ENCODE measurements at regions of chr17 and their contacts with region 1.

Region 1: DNA sequence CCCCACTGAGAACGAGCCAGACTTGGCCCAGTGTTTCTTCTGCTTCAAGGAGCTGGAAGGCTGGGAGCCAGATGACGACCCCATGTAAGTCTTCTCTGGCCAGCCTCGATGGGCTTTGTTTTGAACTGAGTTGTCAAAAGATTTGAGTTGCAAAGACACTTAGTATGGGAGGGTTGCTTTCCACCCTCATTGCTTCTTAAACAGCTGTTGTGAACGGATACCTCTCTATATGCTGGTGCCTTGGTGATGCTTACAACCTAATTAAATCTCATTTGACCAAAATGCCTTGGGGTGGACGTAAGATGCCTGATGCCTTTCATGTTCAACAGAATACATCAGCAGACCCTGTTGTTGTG is 631 bp downstream of the BIRC5 start:
- DNase-seq: no peak
- H3K4me3 ChIP-seq: peak overlapping the region; percentile 40 to 51
- H3K27ac ChIP-seq: no peak overlapping the region
- H3K4me1 ChIP-seq: peaks cover 12% of the 10 kb centered on the region
- H3K27me3 ChIP-seq: no peaks in the 10 kb centered on the region
- CTCF ChIP-seq: no peak
- POLR2A ChIP-seq: no peak

Region 2: GRCh38 chr17:77700165-77700881 is 514.4 kb before region 1 on chr17:
- intact Hi-C with region 1: loop called (anchors 10 kb)
- DNase-seq: no peak
- H3K4me3 ChIP-seq: no peak overlapping the region
- H3K27ac ChIP-seq: no peak overlapping the region
- H3K4me1 ChIP-seq: peaks cover 21% of the 10 kb centered on the region
- H3K27me3 ChIP-seq: no peaks in the 10 kb centered on the region
- CTCF ChIP-seq: no peak
- POLR2A ChIP-seq: no peak

Region 3: GRCh38 chr17:78241277-78242023 is 26.8 kb after region 1 on chr17:
- intact Hi-C with region 1: no loop called
- DNase-seq: no peak
- H3K4me3 ChIP-seq: no peak overlapping the region
- H3K27ac ChIP-seq: no peak overlapping the region
- H3K4me1 ChIP-seq: no peaks in the 10 kb centered on the region
- H3K27me3 ChIP-seq: no peaks in the 10 kb centered on the region
- CTCF ChIP-seq: no peak
- POLR2A ChIP-seq: no peak